CD4-positive, alpha-beta memory T cell (primary cell): ENCODE measurements at regions of chr17 and their contacts with region 1.

Region 1: DNA sequence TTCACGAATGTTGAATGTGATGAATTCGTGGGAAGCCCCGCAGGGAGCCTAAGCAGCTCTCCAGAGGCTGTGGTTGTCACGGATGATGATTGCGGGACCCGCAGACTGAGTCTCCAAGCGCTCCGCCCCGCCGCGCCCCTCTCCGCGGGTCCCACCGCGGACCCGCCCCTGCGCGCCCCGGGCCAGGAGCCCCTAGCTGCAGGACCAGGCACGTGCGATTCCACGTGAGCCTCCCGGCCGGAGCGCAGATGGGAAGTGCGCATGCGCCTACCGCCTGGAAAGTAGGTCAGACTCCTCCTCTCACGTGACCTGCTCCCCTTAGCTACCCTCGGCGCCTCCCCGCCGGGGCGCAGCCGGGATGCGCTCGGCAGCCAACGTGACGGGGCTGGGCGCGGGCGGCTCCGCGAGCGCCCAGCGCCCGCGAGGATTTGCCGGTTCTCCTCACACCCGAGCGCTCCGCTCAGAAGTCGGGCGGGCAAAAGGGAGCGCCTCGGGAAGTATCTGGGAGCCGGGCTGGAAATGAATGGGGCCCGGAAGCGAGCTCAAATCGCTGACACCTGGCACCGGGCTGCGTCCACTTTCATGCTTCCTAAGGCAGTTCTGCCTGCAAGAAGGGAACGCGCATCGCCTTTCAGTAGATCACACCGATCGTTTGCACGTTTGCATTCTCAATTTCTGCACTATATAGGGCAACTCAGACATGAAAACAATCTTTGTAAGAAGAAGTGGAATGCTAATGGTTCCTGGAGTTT is 26.4 kb upstream of the HLF start:
- DNase-seq: peak; percentile 87 to 91 (median 90)
- H3K4me3 ChIP-seq: peak overlapping the region; percentile 20 to 66
- H3K4me3 Mint-ChIP-seq: peak overlapping the region; percentile 89 to 95 (median 92)
- H3K27ac ChIP-seq: peak overlapping the region; percentile 47
- H3K27ac Mint-ChIP-seq: peak overlapping the region; percentile 87 to 94 (median 93)
- H3K4me1 ChIP-seq: peaks cover 28% of the 10 kb centered on the region
- H3K4me1 Mint-ChIP-seq: peaks cover 20 to 31% (median 29%) of the 10 kb centered on the region in 4 donors
- H3K27me3 ChIP-seq: no peaks in the 10 kb centered on the region
- H3K27me3 Mint-ChIP-seq: peaks cover 2 to 7% of the 10 kb centered on the region in 2 donors

Region 2: DNA sequence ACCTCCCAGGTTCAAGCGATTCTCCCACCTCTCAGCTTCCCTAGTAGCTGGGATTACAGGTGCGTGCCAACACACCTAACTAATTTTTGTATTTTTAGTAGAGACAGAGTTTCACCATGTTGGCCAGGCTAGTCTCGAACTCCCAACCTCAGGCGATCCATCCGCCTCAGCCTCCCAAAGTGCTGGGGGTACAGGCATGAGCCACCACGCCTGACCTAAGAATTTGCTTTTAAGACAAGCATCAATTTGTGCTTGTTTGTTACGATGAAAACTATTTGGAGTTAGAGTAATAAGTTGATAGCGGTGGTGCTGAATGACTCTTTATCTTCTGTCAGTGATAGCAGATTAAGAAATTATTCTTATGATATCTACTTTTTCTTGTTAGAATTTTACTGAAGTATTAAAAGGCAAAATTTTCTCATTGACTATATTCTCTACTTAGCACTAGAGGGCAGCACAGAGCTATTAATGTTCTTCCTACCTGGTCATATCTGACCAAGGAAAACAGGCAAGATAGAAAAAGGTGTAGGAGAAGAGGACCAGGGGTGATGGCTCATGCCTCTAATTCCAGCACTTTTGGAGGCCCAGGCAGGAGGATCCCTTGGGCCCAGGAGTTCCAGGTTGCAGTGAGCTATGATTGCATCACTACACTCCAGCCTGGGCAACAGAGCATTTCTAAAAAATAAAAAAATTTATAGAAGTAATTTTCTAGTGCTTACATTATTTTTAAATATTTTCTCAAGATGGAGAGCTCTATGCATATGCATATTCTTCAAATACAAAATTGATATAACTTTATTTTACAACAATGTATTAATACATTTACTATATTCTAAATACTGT is 245.3 kb before region 1 on chr17:
- CTCF ChIA-PET with region 1: interaction called, 31 read pairs
- POLR2A ChIA-PET with region 1: interaction called, 4 read pairs
- intact Hi-C with region 1: no loop called
- DNase-seq: peak in 4 of 5 donors; percentile 49 to 59 (median 56)
- H3K4me3 ChIP-seq: no peak overlapping the region
- H3K4me3 Mint-ChIP-seq: no peak overlapping the region
- H3K27ac ChIP-seq: no peak overlapping the region
- H3K27ac Mint-ChIP-seq: no peak overlapping the region
- H3K4me1 ChIP-seq: no peaks in the 10 kb centered on the region
- H3K4me1 Mint-ChIP-seq: no peaks in the 10 kb centered on the region
- H3K27me3 ChIP-seq: no peaks in the 10 kb centered on the region
- H3K27me3 Mint-ChIP-seq: no peaks in the 10 kb centered on the region

Region 3: DNA sequence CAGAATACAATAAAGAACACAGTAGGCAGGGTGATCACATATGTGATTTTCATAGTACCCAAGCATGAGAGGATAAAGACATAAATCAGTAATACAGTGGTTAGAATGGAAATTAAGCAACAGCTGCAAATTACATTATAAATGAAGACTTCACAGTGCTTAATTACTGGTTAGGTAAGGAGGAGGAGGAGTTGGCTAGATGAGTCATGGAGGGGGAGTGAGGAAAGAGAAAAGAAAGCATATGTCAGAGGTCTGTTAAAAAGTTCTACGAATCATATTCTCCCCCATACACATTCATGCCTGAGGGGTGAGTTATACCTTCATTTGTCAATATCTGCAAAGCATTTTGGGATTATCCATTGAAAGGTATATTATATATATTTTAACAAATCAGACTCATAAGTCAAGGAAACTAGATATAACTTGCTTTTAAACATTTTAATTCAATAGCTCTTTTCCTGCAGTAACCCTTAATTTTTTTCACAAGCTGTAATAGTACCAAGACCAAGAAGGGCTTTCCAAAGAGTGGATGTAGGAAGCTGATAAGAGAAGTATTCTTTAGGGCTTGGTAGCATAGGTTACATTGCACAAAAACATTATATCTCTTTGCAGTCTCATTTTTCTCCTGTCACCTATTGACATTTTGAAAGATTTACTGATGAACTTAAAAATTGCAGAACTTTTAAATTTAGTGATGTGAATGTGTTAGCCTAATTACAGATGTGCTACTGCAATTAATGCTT is 170.5 kb before region 1 on chr17:
- CTCF ChIA-PET with region 1: interaction called, 3 read pairs
- POLR2A ChIA-PET with region 1: interaction called, 15 read pairs
- intact Hi-C with region 1: loop called (anchors 5 kb)
- DNase-seq: no peak
- H3K4me3 ChIP-seq: no peak overlapping the region
- H3K4me3 Mint-ChIP-seq: no peak overlapping the region
- H3K27ac ChIP-seq: no peak overlapping the region
- H3K27ac Mint-ChIP-seq: peak overlapping the region in 2 of 7 donors; percentile 6 to 10
- H3K4me1 ChIP-seq: peaks cover 30% of the 10 kb centered on the region
- H3K4me1 Mint-ChIP-seq: peaks cover 21 to 44% (median 27%) of the 10 kb centered on the region in 4 donors
- H3K27me3 ChIP-seq: no peaks in the 10 kb centered on the region
- H3K27me3 Mint-ChIP-seq: no peaks in the 10 kb centered on the region

Region 4: GRCh38 chr17:55090079-55090492 is 148.3 kb before region 1 on chr17:
- CTCF ChIA-PET with region 1: interaction called, 13 read pairs
- POLR2A ChIA-PET with region 1: interaction called, 43 read pairs
- intact Hi-C with region 1: loop called (anchors 2 kb)
- DNase-seq: peak; percentile 51 to 68 (median 63)
- H3K4me3 ChIP-seq: no peak overlapping the region
- H3K4me3 Mint-ChIP-seq: peak overlapping the region in 7 of 8 donors; percentile 3 to 65 (median 54)
- H3K27ac ChIP-seq: peak overlapping the region; percentile 42
- H3K27ac Mint-ChIP-seq: peak overlapping the region; percentile 81 to 95 (median 91)
- H3K4me1 ChIP-seq: peaks cover 64% of the 10 kb centered on the region
- H3K4me1 Mint-ChIP-seq: peaks cover 31 to 51% (median 42%) of the 10 kb centered on the region in 4 donors
- H3K27me3 ChIP-seq: no peaks in the 10 kb centered on the region
- H3K27me3 Mint-ChIP-seq: no peaks in the 10 kb centered on the region

Region 5: GRCh38 chr17:55264645-55265298 is 26.4 kb after region 1 on chr17 and contains the start of gene HLF:
- CTCF ChIA-PET with region 1: interaction called, 109 read pairs
- POLR2A ChIA-PET with region 1: interaction called, 119 read pairs
- intact Hi-C with region 1: loop called (anchors 1 kb)
- DNase-seq: peak; percentile 71 to 85 (median 82)
- H3K4me3 ChIP-seq: peak within 1 kb of the TSS; percentile 45 to 58
- H3K4me3 Mint-ChIP-seq: peak within 1 kb of the TSS; percentile 85 to 95 (median 88)
- H3K27ac ChIP-seq: peak within 1 kb of the TSS; percentile 22
- H3K27ac Mint-ChIP-seq: peak within 1 kb of the TSS; percentile 53 to 90 (median 85)
- H3K4me1 ChIP-seq: peaks cover 23% of the 10 kb centered on the region
- H3K4me1 Mint-ChIP-seq: peaks cover 24 to 54% (median 28%) of the 10 kb centered on the region in 4 donors
- H3K27me3 ChIP-seq: peaks cover 4% of the 10 kb centered on the region
- H3K27me3 Mint-ChIP-seq: peaks cover 7 to 11% of the 10 kb centered on the region in 2 donors
- total RNA-seq, gene HLF: 3.5 to 3.9 TPM

Region 6: GRCh38 chr17:55421179-55421934 is 183.0 kb after region 1 on chr17 and contains the start of gene MMD:
- CTCF ChIA-PET with region 1: no interaction called
- POLR2A ChIA-PET with region 1: interaction called, 7 read pairs
- intact Hi-C with region 1: loop called (anchors 2 kb)
- DNase-seq: peak in 4 of 5 donors; percentile 2 to 40 (median 16)
- H3K4me3 ChIP-seq: peak within 1 kb of the TSS; percentile 80 to 81
- H3K4me3 Mint-ChIP-seq: peak within 1 kb of the TSS; percentile 87 to 96 (median 93)
- H3K27ac ChIP-seq: peak within 1 kb of the TSS; percentile 77
- H3K27ac Mint-ChIP-seq: peak within 1 kb of the TSS; percentile 81 to 97 (median 94)
- H3K4me1 ChIP-seq: peaks cover 20% of the 10 kb centered on the region
- H3K4me1 Mint-ChIP-seq: peaks cover 33 to 49% (median 36%) of the 10 kb centered on the region in 4 donors
- H3K27me3 ChIP-seq: peaks cover 12% of the 10 kb centered on the region
- H3K27me3 Mint-ChIP-seq: peaks cover 18 to 19% of the 10 kb centered on the region in 2 donors
- total RNA-seq, gene MMD: 4.2 to 9.2 TPM